ENCODE measurements at regions of chr15 and their contacts with region 1.

Region 1: GRCh38 chr15:40108855-40109735 is at the start of gene BMF:
- DNase-seq: peak; percentile 98
- H3K4me3 Mint-ChIP-seq: peak within 1 kb of the TSS; percentile 84
- H3K27ac Mint-ChIP-seq: peak within 1 kb of the TSS; percentile 50
- H3K4me1 Mint-ChIP-seq: peaks cover 45% of the 10 kb centered on the region
- H3K27me3 Mint-ChIP-seq: peaks cover 6% of the 10 kb centered on the region
- total RNA-seq, gene BMF: 6.9 to 7.3 TPM

Region 2: GRCh38 chr15:39782441-39783138 is 326.5 kb before region 1 on chr15 and contains the start of gene FSIP1:
- CTCF ChIA-PET with region 1: interaction called, 3 read pairs
- POLR2A ChIA-PET with region 1: no interaction called
- intact Hi-C with region 1: loop called (anchors 5 kb)
- DNase-seq: peak; percentile 97
- H3K4me3 Mint-ChIP-seq: peak within 1 kb of the TSS; percentile 79
- H3K27ac Mint-ChIP-seq: peak within 1 kb of the TSS; percentile 93
- H3K4me1 Mint-ChIP-seq: peaks cover 41% of the 10 kb centered on the region
- H3K27me3 Mint-ChIP-seq: no peaks in the 10 kb centered on the region
- total RNA-seq, gene FSIP1: 0.29 to 0.68 TPM

Region 3: DNA sequence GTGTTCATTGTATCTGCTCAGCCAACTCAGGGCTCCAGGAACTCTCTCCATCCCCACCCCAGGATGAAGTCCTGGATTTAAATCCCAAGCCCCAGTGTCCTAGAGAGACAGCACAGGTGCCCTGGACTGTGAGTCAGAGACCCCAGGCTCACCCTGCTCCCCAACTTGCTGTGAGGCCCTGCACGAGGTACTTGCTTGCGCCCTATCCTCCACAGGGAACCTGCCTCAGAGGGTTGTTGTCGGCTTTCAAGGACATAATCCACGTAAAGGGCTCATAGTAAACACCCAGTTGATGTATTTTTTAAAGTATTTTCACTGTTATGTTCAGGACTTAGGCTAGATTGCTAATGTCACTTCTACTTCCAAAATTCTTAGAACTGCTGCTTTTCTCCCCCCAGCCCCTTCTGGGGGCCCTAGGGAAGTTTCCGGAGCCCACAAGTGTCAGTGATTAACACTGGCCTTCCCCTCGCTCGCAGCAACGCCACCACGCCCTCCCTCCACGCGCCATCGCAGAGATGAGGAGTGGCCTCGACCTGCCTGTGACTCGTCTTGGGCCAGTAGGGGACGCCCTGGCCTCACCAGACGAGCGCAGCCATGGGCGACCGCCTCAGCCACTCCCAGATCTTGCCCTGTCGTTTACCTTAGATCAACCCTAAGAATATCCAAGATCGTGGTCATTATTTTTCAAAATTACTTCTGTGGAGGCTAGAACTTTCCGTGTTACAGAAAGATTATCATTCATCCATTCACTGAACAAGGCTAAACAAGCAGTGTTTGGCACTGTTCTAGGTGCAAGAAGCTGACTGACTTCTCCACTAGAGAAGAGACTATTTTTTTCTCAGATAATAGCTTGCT is 64.2 kb before region 1 on chr15:
- CTCF ChIA-PET with region 1: interaction called, 145 read pairs
- POLR2A ChIA-PET with region 1: interaction called, 30 read pairs
- intact Hi-C with region 1: loop called (anchors 1 kb)
- DNase-seq: peak; percentile 93
- H3K4me3 Mint-ChIP-seq: peak overlapping the region; percentile 50
- H3K27ac Mint-ChIP-seq: peak overlapping the region; percentile 71
- H3K4me1 Mint-ChIP-seq: peaks cover 65% of the 10 kb centered on the region
- H3K27me3 Mint-ChIP-seq: no peaks in the 10 kb centered on the region

Region 4: DNA sequence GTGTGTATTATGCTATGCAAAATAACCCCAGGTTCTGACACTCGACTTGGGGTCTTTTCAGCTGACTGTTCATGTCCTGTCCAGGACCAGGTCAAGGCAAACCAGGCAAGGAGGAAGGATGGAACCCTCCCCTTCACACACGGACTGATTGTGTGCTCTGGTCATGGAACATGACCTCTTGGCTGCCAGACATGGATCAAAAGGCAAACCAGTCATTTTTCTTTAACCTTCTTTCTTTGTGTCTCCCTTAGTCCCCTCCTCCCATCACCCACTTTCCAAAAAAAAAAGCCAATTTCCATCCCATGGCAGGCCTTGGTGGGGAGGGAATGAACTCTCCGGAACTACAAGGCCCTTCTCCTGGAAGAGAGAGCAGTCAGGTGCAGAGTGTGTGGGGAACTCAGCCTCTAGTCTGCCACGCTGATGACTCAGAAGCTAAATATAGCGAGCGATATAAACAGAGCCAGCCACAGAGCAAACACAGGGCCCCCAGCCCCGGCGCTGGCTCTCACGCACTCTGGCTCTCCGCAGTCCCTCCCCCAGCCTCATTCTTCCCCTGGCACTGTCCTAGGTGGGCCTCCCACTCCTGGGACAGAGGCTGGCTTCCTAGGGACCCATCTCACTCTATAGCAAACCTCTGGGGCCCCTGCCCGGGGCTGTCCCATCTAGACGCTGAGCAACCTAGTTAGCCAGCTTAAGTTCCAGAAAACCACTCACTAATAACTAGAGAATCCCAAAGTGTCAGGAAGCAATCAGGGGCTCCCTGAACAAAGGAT is 10.4 kb before region 1 on chr15:
- CTCF ChIA-PET with region 1: interaction called, 91 read pairs
- POLR2A ChIA-PET with region 1: interaction called, 20 read pairs
- intact Hi-C with region 1: loop called (anchors 1 kb)
- DNase-seq: peak; percentile 83
- H3K4me3 Mint-ChIP-seq: peak overlapping the region; percentile 51
- H3K27ac Mint-ChIP-seq: peak overlapping the region; percentile 92
- H3K4me1 Mint-ChIP-seq: peaks cover 55% of the 10 kb centered on the region
- H3K27me3 Mint-ChIP-seq: no peaks in the 10 kb centered on the region

Region 5: DNA sequence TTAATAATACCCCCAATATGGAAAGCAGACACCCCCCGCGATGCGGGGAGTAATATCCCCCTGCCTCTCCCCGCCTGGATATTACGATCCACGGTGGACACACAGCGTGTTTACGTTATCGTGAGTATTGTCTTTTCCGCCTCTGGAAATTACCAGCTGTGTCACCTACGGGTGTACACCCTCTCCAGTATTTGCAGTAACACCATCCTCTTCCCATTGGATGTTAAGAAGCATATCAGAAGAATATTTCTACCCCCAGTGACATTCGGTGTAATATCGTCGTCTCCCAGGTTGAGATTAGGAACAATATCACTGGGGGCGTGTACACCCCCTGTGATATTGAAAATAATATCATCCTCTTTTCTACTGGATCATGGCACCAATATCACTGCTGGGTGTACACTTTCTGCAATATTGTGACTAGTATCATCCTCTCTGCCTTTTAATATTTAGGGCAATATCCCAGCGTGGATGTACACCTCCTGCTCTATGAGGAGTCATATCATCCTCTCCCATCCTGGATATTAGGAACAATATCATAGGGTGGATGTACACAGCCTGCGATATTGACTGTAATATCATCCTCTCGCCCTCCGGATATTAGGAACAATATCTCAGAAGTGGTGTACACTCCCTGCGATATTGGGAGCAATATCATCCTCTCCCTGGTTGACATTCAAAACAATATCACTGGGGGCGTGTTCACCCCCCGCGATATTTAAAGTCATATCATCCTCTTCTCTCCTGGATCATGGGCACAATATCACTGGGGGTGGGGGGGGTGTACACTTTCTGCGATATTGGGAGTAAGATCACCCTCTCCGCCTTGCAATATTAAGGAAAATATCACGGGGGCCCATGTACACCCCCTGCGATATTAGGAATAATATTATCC is 19.9 kb after region 1 on chr15:
- CTCF ChIA-PET with region 1: interaction called, 7 read pairs
- POLR2A ChIA-PET with region 1: interaction called, 3 read pairs
- intact Hi-C with region 1: loop called (anchors 1 kb)
- DNase-seq: peak; percentile 48
- H3K4me3 Mint-ChIP-seq: no peak overlapping the region
- H3K27ac Mint-ChIP-seq: peak overlapping the region; percentile 46
- H3K4me1 Mint-ChIP-seq: no peaks in the 10 kb centered on the region
- H3K27me3 Mint-ChIP-seq: peaks cover 13% of the 10 kb centered on the region